Gastrocnemius medialis (tissue), 4 donors: ENCODE measurements at regions of chr9 and their contacts with region 1.

Region 1: GRCh38 chr9:17810728-17811571 is 232.1 kb downstream of the SH3GL2 start:
- DNase-seq: no peak
- ATAC-seq: no peak
- H3K4me3 ChIP-seq: no peak overlapping the region
- H3K27ac ChIP-seq: no peak overlapping the region
- H3K4me1 ChIP-seq: no peaks in the 10 kb centered on the region
- H3K27me3 ChIP-seq: no peaks in the 10 kb centered on the region
- CTCF ChIP-seq: peak; percentile 22 to 63 (median 41)
- POLR2A ChIP-seq: no peak

Region 2: DNA sequence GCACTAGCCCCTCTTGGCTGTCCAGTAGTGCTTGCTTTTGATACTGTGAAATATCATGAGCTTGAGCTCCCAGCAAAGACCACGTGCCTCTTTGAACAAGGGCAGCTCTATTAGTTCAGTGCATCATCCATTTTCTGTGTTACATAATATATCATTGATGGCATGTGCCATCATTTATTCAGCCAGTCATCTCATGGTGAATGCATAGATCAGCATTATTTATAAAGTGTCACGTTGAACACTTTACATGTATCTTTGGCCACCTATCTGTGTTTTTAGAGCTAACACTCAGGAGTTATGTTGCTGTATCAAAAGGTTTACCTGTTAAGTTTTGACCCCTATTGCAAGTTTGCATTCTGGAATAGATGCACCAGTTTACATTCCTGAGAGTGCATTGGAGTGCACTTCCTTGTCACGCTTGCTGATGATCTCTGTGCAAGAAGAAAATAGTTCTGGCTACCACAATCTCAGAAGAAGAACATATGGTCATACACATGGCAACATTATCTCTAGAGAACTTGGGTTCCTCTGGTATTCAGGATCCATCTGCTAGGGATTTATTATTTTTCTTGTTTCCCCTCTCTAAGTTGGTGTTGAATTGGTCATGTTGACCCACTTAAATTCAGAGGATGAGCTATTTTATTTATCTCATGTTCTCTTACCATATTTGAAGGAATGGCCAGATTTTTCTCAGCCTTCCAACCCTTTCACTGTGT is 111.2 kb before region 1 on chr9:
- in situ Hi-C with region 1: loop called in 1 of 4 experiments (anchors 25 kb)
- intact Hi-C with region 1: no loop called
- DNase-seq: no peak
- ATAC-seq: no peak
- H3K4me3 ChIP-seq: no peak overlapping the region
- H3K27ac ChIP-seq: no peak overlapping the region
- H3K4me1 ChIP-seq: no peaks in the 10 kb centered on the region
- H3K27me3 ChIP-seq: no peaks in the 10 kb centered on the region
- CTCF ChIP-seq: no peak
- POLR2A ChIP-seq: no peak

Region 3: GRCh38 chr9:17744786-17745185 is 66.2 kb before region 1 on chr9:
- in situ Hi-C with region 1: no loop called
- intact Hi-C with region 1: no loop called
- DNase-seq: no peak
- ATAC-seq: no peak
- H3K4me3 ChIP-seq: no peak overlapping the region
- H3K27ac ChIP-seq: no peak overlapping the region
- H3K4me1 ChIP-seq: no peaks in the 10 kb centered on the region
- H3K27me3 ChIP-seq: no peaks in the 10 kb centered on the region
- CTCF ChIP-seq: no peak
- POLR2A ChIP-seq: no peak

Region 4: DNA sequence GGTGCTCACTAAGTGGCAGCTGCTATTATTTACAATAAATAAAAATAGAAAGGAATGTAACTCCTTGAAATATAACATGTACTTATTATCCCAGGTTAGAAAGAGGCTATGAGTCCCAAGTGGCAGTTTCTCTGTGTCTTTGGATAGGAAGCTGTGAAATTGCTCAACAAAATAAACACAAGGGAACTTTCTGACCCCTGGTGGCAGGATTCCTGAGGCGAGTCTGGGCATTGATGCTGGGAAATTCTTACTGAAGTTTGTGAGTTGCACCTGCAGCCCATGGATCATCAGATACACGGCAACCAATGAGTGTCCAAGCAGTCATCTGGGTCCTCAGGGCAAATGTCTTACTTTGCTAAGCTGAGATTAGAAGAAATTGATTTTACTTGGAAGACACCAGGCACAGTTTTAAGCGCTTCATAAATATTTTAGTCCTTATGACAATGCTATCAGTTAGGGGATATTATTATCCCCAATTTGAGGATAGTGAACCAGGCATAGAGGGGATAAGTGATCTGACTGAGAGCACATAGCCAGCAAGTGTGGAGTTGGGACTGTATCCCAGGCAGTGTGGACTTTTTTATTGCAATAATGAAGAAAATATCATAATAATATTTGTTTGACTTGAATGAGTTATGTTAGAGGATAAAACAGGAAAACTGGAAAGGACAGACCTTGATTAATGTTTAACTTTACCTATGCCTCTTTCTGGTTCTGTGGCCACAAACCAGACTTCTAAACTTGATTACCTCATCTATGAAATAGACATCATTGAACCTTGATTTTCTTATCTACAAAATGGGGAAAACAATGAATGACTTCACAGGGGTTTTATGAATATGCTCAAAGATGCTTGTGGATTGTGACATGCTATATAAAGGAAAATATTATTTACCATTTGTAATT is 397.5 kb after region 1 on chr9:
- in situ Hi-C with region 1: loop called (anchors 5 to 25 kb)
- intact Hi-C with region 1: no loop called
- DNase-seq: no peak
- ATAC-seq: no peak
- H3K4me3 ChIP-seq: no peak overlapping the region
- H3K27ac ChIP-seq: no peak overlapping the region
- H3K4me1 ChIP-seq: no peaks in the 10 kb centered on the region
- H3K27me3 ChIP-seq: no peaks in the 10 kb centered on the region
- CTCF ChIP-seq: no peak
- POLR2A ChIP-seq: no peak

Region 5: DNA sequence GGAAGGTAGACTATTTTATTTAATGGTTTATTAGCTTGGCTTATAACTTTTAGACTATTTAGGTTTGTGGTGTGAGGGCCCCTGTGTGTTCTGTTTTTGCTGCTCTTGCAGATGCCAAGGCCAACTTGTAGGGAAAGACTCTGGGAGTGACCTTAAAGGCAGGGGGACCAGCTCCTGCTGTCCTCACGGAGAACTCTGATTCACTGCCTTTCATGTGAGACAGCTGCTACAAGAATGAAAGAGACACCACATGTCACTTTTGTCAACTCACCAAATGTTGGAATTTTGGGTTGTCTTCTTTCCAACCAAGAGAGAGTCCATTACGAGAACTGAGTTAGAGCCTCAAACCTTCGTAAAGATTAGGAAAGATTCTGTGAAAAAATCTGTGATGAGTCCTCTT is 404.7 kb after region 1 on chr9:
- in situ Hi-C with region 1: loop called in 3 of 4 experiments (anchors 10 to 25 kb)
- intact Hi-C with region 1: no loop called
- DNase-seq: no peak
- ATAC-seq: no peak
- H3K4me3 ChIP-seq: no peak overlapping the region
- H3K27ac ChIP-seq: no peak overlapping the region
- H3K4me1 ChIP-seq: no peaks in the 10 kb centered on the region
- H3K27me3 ChIP-seq: no peaks in the 10 kb centered on the region
- CTCF ChIP-seq: no peak
- POLR2A ChIP-seq: no peak

Region 6: GRCh38 chr9:19028835-19029451 is 1218.0 kb after region 1 on chr9:
- in situ Hi-C with region 1: loop called in 1 of 4 experiments (anchors 25 kb)
- intact Hi-C with region 1: loop called (anchors 5 kb)
- DNase-seq: no peak
- ATAC-seq: peak in 1 of 2 donors; percentile 46
- H3K4me3 ChIP-seq: no peak overlapping the region
- H3K27ac ChIP-seq: no peak overlapping the region
- H3K4me1 ChIP-seq: no peaks in the 10 kb centered on the region
- H3K27me3 ChIP-seq: peaks cover 0 to 8% (median 0%) of the 10 kb centered on the region in 3 donors
- CTCF ChIP-seq: peak; percentile 22 to 74 (median 63)
- POLR2A ChIP-seq: no peak